Breast epithelium (tissue), 4 donors: ENCODE measurements at regions of chr4 and their contacts with region 1.

Region 1: GRCh38 chr4:114093221-114093715 is 113.8 kb upstream of the ARSJ start:
- DNase-seq: no peak
- H3K4me3 ChIP-seq: no peak overlapping the region
- H3K27ac ChIP-seq: no peak overlapping the region
- H3K4me1 ChIP-seq: no peaks in the 10 kb centered on the region
- H3K27me3 ChIP-seq: no peaks in the 10 kb centered on the region
- CTCF ChIP-seq: no peak
- POLR2A ChIP-seq: no peak

Region 2: DNA sequence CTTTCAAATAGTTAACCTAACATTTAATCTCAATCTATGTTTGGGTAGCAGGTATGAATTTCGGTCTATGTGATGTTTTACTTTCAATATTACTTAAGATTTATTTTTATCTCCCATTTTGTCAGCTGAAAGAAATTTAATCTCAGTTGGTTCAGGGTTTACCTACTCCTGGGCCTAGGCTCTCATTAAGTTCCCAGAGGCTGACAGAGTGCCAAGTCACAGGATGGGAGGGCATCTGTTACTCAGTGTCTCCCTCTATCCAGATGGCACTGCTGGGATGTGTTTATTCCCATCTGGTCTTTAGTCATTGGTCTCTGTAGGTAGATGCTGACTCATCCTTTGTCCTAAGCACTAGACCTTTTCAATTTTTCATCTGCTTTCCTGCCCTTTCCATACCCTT is 15.6 kb after region 1 on chr4:
- intact Hi-C with region 1: no loop called
- DNase-seq: no peak
- H3K4me3 ChIP-seq: no peak overlapping the region
- H3K27ac ChIP-seq: no peak overlapping the region
- H3K4me1 ChIP-seq: no peaks in the 10 kb centered on the region
- H3K27me3 ChIP-seq: no peaks in the 10 kb centered on the region
- CTCF ChIP-seq: no peak
- POLR2A ChIP-seq: no peak

Region 3: DNA sequence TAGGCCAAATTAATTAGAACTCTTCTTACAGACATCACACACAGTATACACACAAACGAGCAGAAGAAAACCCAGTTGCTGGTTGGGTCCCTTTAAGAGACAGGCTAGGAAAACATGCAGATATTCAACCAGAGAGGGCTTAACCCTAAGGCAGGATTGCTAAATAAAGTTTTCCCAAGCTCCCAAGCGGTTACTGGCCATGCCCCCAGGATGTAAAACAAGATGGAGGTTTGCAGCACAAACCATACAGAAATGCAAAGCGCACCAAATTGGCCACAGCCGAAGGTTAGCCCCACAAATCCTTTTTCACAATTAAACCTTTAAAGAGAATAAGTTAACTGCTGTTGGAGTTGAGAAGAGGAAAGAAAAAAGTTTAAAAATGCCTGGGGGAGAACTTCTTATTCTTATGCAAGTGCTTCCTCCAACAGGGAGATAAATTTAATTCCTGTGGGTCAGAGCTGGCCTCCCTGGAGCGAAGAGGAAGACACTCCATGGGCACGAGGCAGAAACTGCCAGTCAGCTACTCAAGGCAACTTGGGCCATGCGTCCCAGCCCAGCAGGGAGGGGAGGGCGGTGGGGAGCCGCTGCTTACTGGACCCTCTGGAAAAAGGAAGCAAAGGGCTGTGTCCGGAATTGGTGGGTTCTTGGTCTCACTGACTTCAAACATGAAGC is 53.8 kb after region 1 on chr4:
- intact Hi-C with region 1: no loop called
- DNase-seq: no peak
- H3K4me3 ChIP-seq: no peak overlapping the region
- H3K27ac ChIP-seq: no peak overlapping the region
- H3K4me1 ChIP-seq: no peaks in the 10 kb centered on the region
- H3K27me3 ChIP-seq: no peaks in the 10 kb centered on the region
- CTCF ChIP-seq: no peak
- POLR2A ChIP-seq: no peak

Region 4: GRCh38 chr4:114642173-114642780 is 549.0 kb after region 1 on chr4:
- intact Hi-C with region 1: loop called (anchors 10 kb)
- DNase-seq: no peak
- H3K4me3 ChIP-seq: no peak overlapping the region
- H3K27ac ChIP-seq: no peak overlapping the region
- H3K4me1 ChIP-seq: no peaks in the 10 kb centered on the region
- H3K27me3 ChIP-seq: no peaks in the 10 kb centered on the region
- CTCF ChIP-seq: no peak
- POLR2A ChIP-seq: no peak